Endothelial cell of umbilical vein (primary cell): ENCODE measurements at regions of chr7 and their contacts with region 1.

Region 1: GRCh38 chr7:23696916-23697441 is 13.0 kb upstream of the STK31 start:
- DNase-seq: peak; percentile 47
- H3K4me3 ChIP-seq: no peak overlapping the region
- H3K27ac ChIP-seq: no peak overlapping the region
- H3K4me1 ChIP-seq: no peaks in the 10 kb centered on the region
- H3K27me3 ChIP-seq: no peaks in the 10 kb centered on the region
- CTCF ChIP-seq: peak; percentile 74 to 77
- POLR2A ChIP-seq: no peak

Region 2: GRCh38 chr7:22499044-22499443 is 1197.9 kb before region 1 on chr7:
- CTCF ChIA-PET with region 1: no interaction called
- POLR2A ChIA-PET with region 1: no interaction called
- dilution Hi-C with region 1: no loop called
- intact Hi-C with region 1: no loop called
- DNase-seq: no peak
- H3K4me3 ChIP-seq: peak overlapping the region in 2 of 3 experiments; percentile 40 to 43
- H3K27ac ChIP-seq: peak overlapping the region; percentile 90
- H3K4me1 ChIP-seq: peaks cover 39% of the 10 kb centered on the region
- H3K27me3 ChIP-seq: no peaks in the 10 kb centered on the region
- CTCF ChIP-seq: no peak
- POLR2A ChIP-seq: peak; percentile 43

Region 3: GRCh38 chr7:23679898-23680413 is 17.0 kb before region 1 on chr7 and contains the start of gene FAM221A:
- CTCF ChIA-PET with region 1: interaction called, 16 read pairs
- POLR2A ChIA-PET with region 1: no interaction called
- dilution Hi-C with region 1: no loop called
- intact Hi-C with region 1: loop called (anchors 2 kb)
- DNase-seq: peak; percentile 84
- H3K4me3 ChIP-seq: peak within 1 kb of the TSS; percentile 40 to 80 (median 72)
- H3K27ac ChIP-seq: no peak within 1 kb of the TSS
- H3K4me1 ChIP-seq: peaks cover 2% of the 10 kb centered on the region
- H3K27me3 ChIP-seq: peaks cover 0 to 5% of the 10 kb centered on the region in 2 experiments
- CTCF ChIP-seq: peak; percentile 70 to 89
- POLR2A ChIP-seq: no peak
- total RNA-seq, gene FAM221A: 6.1 and 8.1 TPM in 2 replicates

Region 4: GRCh38 chr7:23685731-23686130 is 11.2 kb before region 1 on chr7:
- CTCF ChIA-PET with region 1: interaction called, 16 read pairs
- POLR2A ChIA-PET with region 1: no interaction called
- dilution Hi-C with region 1: no loop called
- intact Hi-C with region 1: loop called (anchors 2 kb)
- DNase-seq: no peak
- H3K4me3 ChIP-seq: no peak overlapping the region
- H3K27ac ChIP-seq: no peak overlapping the region
- H3K4me1 ChIP-seq: peaks cover 2% of the 10 kb centered on the region
- H3K27me3 ChIP-seq: no peaks in the 10 kb centered on the region
- CTCF ChIP-seq: no peak
- POLR2A ChIP-seq: no peak

Region 5: GRCh38 chr7:23712368-23713284 is 15.6 kb after region 1 on chr7:
- CTCF ChIA-PET with region 1: interaction called, 55 read pairs
- POLR2A ChIA-PET with region 1: no interaction called
- dilution Hi-C with region 1: no loop called
- intact Hi-C with region 1: no loop called
- DNase-seq: peak; percentile 58
- H3K4me3 ChIP-seq: no peak overlapping the region
- H3K27ac ChIP-seq: no peak overlapping the region
- H3K4me1 ChIP-seq: no peaks in the 10 kb centered on the region
- H3K27me3 ChIP-seq: no peaks in the 10 kb centered on the region
- CTCF ChIP-seq: peak; percentile 20 to 40
- POLR2A ChIP-seq: no peak

Region 6: GRCh38 chr7:24010495-24010894 is 313.5 kb after region 1 on chr7:
- CTCF ChIA-PET with region 1: no interaction called
- POLR2A ChIA-PET with region 1: no interaction called
- dilution Hi-C with region 1: no loop called
- intact Hi-C with region 1: no loop called
- DNase-seq: no peak
- H3K4me3 ChIP-seq: no peak overlapping the region
- H3K27ac ChIP-seq: no peak overlapping the region
- H3K4me1 ChIP-seq: no peaks in the 10 kb centered on the region
- H3K27me3 ChIP-seq: no peaks in the 10 kb centered on the region
- CTCF ChIP-seq: no peak
- POLR2A ChIP-seq: no peak

Region 7: DNA sequence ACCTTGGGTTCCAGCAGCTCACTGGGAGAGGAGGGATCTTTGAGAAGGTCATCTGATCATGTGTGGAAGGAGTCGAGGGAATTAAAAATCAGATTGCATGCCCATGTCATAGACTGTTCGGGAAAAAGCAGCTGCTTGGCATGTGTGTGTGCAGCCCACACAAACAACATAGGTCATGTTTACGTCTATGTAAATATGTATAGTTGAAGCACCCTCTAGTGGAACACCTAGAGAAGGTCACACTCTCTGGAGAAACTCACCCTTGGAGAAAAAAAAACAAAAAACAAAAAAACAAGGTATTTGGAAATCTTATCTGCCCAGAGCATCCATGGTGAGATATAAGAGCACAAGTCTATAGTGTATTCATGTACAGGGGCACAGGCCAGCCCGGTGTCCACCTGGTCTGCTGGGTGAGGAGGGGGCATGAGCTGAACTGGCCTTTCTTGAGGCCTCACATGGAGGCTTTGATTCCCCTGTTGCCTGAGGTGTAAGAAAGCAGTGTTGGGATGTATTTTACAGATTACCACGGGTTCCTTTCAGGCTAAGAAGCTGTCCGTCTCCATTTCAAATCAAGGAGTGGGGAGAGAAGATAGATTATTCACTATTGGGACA is 685.0 kb after region 1 on chr7:
- CTCF ChIA-PET with region 1: interaction called, 7 read pairs
- POLR2A ChIA-PET with region 1: no interaction called
- dilution Hi-C with region 1: no loop called
- intact Hi-C with region 1: loop called (anchors 5 kb)
- DNase-seq: no peak
- H3K4me3 ChIP-seq: no peak overlapping the region
- H3K27ac ChIP-seq: no peak overlapping the region
- H3K4me1 ChIP-seq: no peaks in the 10 kb centered on the region
- H3K27me3 ChIP-seq: no peaks in the 10 kb centered on the region
- CTCF ChIP-seq: peak; percentile 13 to 16
- POLR2A ChIP-seq: no peak